Left ventricle myocardium superior (tissue), 1 donor: ENCODE measurements at regions of chr1 and their contacts with region 1.

Region 1: GRCh38 chr1:61839679-61840078 is 97.4 kb downstream of the PATJ start:
- DNase-seq: no peak
- ATAC-seq: no peak

Region 2: GRCh38 chr1:61741711-61742619 is 97.7 kb before region 1 on chr1 and contains the start of gene PATJ:
- intact Hi-C with region 1: loop called (anchors 10 kb)
- DNase-seq: peak; percentile 74
- ATAC-seq: peak; percentile 87
- total RNA-seq, gene PATJ: 125 TPM

Region 3: DNA sequence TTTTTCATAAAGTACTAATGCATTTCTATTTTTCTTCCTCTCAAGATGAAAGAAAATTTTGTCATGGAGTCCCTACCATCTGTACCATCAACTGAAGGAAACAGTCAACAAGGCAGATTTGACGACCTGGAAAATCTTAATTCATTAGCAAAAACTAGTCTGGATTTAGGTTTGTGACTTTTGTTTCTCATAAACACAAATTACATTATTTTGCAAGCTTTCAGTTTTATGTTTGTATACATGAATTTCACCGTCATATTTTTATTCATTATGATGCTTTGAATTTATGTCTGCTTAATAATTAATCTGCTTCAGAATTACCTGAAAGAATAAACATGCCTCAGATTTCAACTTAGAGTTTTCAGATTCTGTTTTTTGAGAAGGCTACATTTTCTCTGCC is 35.5 kb after region 1 on chr1:
- intact Hi-C with region 1: no loop called
- DNase-seq: no peak
- ATAC-seq: no peak

Region 4: DNA sequence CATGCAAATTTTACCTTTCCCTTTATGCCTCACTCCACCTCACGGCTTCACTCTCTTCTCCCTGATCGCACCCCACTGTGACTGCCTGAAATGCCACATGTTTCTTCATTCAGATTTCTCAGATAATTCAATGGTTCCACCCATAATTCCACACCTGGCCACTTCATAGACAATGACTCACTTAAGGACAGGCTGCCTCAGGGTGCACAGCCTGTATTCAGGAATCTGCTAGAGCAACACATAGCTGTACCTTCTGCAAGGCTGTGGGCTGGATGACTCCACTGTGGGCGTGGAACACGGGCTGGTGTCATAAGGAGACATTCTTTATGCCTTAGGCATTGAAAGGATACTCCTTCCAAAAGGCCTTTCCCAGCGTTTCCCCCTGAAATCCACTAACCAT is 391.0 kb after region 1 on chr1:
- intact Hi-C with region 1: no loop called
- DNase-seq: no peak
- ATAC-seq: no peak